ENCODE measurements at regions of chr17 and their contacts with region 1.

Region 1: DNA sequence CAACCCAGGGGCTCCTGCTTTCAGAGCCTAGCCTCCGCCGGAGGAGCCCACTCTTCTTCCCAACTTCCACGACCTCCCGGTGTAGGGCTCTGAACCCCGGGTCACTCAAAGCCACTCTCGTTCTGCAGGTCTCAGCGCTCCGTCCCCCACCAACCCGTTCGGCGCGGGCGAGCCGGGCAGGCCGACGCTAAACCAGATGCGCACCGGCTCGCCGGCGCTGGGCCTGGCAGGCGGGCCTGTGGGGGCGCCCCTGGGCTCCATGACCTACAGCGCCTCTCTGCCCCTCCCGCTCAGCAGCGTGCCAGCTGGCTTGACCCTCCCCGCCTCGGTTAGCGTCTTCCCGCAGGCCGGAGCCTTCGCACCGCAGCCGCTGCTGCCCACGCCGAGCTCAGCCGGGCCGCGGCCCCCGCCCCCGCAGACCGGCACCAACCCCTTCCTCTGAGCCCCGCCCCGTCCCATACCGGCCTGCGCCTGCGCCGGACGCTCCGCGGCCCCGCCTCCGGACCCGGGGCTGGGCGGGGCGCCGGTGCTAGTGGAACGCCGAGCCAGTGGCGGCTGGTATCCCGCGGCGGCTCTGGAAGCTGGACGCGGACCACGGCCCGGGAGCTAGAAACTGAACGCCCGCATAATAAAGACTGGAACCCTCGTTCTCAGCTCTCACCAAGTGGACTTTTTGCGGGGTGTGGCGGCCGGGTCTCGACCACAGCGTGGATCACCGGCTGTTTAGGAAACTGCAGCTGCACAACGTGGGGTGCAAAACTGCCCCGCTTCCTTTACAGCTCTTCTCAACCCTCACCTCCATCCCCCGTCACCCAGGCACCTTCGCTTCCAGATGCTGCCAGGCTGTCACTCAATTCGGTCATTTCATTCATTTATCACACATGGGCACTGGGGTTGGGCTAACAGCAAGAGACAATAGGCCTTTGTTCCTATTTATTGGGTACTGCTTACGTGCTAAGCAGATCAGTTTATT is 5.0 kb upstream of the SPATA20 start:
- DNase-seq: peak; percentile 89
- H3K4me3 Mint-ChIP-seq: peak overlapping the region; percentile 75
- H3K27ac Mint-ChIP-seq: no peak overlapping the region
- H3K4me1 Mint-ChIP-seq: peaks cover 16% of the 10 kb centered on the region
- H3K27me3 Mint-ChIP-seq: peaks cover 6% of the 10 kb centered on the region

Region 2: DNA sequence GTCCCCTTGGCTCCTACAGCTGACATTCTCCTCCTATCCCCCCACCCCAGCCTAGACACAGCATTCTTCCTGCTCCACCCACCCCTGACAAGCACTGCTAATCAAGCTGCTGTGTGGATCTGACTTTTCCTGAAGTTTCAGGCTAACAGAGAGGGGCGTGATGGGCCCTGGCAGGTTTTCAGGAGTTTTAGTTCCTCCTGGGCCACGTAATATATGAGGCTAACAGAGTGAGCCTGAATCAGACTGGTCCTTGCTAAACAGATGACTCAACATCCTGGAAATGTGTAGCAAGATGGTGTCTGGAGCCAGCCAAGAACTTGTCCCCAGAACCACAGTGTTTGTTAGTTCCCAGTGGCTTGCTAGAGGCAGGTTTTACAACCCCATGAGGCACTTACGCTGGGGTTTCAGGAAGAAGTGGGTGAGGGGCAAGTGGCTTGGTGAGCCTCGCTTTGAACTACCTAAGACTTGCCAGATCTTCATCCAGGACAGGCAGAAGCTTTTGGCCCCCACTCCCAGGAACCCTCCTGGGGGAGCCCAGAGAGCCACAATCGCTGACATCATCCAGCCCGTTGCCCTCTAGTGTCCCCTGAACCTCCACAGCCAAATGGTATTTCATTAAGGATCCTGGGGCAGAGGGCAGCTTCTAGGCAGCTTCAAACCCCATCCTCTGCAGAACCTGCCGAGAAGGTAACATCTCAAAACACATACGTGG is 251.9 kb before region 1 on chr17:
- CTCF ChIA-PET with region 1: no interaction called
- POLR2A ChIA-PET with region 1: no interaction called
- intact Hi-C with region 1: no loop called
- DNase-seq: peak; percentile 61
- H3K4me3 Mint-ChIP-seq: no peak overlapping the region
- H3K27ac Mint-ChIP-seq: peak overlapping the region; percentile 79
- H3K4me1 Mint-ChIP-seq: peaks cover 19% of the 10 kb centered on the region
- H3K27me3 Mint-ChIP-seq: peaks cover 19% of the 10 kb centered on the region

Region 3: GRCh38 chr17:50425682-50426471 is 116.1 kb before region 1 on chr17 and contains the start of gene ACSF2:
- CTCF ChIA-PET with region 1: no interaction called
- POLR2A ChIA-PET with region 1: no interaction called
- intact Hi-C with region 1: loop called (anchors 1 kb)
- DNase-seq: peak; percentile 83
- H3K4me3 Mint-ChIP-seq: peak within 1 kb of the TSS; percentile 81
- H3K27ac Mint-ChIP-seq: peak within 1 kb of the TSS; percentile 43
- H3K4me1 Mint-ChIP-seq: peaks cover 27% of the 10 kb centered on the region
- H3K27me3 Mint-ChIP-seq: no peaks in the 10 kb centered on the region
- total RNA-seq, gene ACSF2: 20.1 to 23.6 TPM

Region 4: GRCh38 chr17:50468409-50469207 is 73.4 kb before region 1 on chr17 and contains the start of gene CHAD:
- CTCF ChIA-PET with region 1: no interaction called
- POLR2A ChIA-PET with region 1: no interaction called
- intact Hi-C with region 1: no loop called
- DNase-seq: no peak
- H3K4me3 Mint-ChIP-seq: no peak within 1 kb of the TSS
- H3K27ac Mint-ChIP-seq: no peak within 1 kb of the TSS
- H3K4me1 Mint-ChIP-seq: peaks cover 8% of the 10 kb centered on the region
- H3K27me3 Mint-ChIP-seq: peaks cover 17% of the 10 kb centered on the region
- total RNA-seq, gene CHAD: not detected

Region 5: DNA sequence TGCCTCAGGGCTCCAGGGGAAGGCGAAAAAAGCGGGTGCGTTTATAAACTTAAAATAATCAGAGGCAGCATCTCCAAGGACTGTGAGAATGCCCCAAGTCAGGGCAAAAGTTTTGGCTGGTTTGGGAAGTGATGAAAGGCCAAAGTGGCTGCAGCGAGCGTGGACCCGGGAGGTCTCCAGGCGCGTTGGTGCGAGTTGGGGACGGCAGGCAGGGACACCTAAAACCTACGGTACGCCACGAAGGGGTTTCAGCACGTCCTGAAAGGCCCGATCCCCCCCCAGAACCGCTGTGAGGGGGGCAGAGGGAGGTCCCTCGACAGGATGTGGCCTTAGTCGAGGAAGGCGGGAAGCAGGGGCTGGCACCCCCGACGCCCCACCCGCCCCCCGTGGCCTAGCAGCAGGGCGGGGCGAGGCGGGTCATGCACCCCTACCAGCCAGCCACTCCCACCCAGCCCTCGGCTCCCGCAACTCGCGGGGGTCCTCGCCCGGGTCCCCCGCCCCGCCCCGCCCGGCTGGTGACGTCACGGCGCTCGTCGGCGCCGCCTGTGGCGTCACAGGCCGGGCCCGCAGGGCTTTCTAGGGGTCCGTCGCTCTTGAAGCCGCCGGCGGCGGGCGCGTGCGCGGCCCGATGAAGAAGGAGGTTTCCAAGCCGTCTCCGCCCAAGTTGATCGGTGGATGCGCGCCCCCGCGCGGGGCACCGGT is 34.0 kb before region 1 on chr17 and contains the start of gene MYCBPAP:
- CTCF ChIA-PET with region 1: interaction called, 8 read pairs
- POLR2A ChIA-PET with region 1: interaction called, 3 read pairs
- intact Hi-C with region 1: loop called (anchors 1 kb)
- DNase-seq: peak; percentile 90
- H3K4me3 Mint-ChIP-seq: peak within 1 kb of the TSS; percentile 95
- H3K27ac Mint-ChIP-seq: peak within 1 kb of the TSS; percentile 82
- H3K4me1 Mint-ChIP-seq: peaks cover 49% of the 10 kb centered on the region
- H3K27me3 Mint-ChIP-seq: no peaks in the 10 kb centered on the region
- total RNA-seq, gene MYCBPAP: 8.1 to 8.5 TPM

Region 6: GRCh38 chr17:50568659-50569058 is 26.7 kb after region 1 on chr17:
- CTCF ChIA-PET with region 1: no interaction called
- POLR2A ChIA-PET with region 1: no interaction called
- intact Hi-C with region 1: no loop called
- DNase-seq: no peak
- H3K4me3 Mint-ChIP-seq: no peak overlapping the region
- H3K27ac Mint-ChIP-seq: no peak overlapping the region
- H3K4me1 Mint-ChIP-seq: peaks cover 8% of the 10 kb centered on the region
- H3K27me3 Mint-ChIP-seq: peaks cover 27% of the 10 kb centered on the region

Region 7: GRCh38 chr17:50707289-50708049 is 165.5 kb after region 1 on chr17 and contains the start of gene ANKRD40:
- CTCF ChIA-PET with region 1: interaction called, 4 read pairs
- POLR2A ChIA-PET with region 1: no interaction called
- intact Hi-C with region 1: loop called (anchors 5 kb)
- DNase-seq: peak; percentile 95
- H3K4me3 Mint-ChIP-seq: peak within 1 kb of the TSS; percentile 96
- H3K27ac Mint-ChIP-seq: peak within 1 kb of the TSS; percentile 96
- H3K4me1 Mint-ChIP-seq: peaks cover 48% of the 10 kb centered on the region
- H3K27me3 Mint-ChIP-seq: no peaks in the 10 kb centered on the region
- total RNA-seq, gene ANKRD40: 27.4 to 27.8 TPM